ENCODE measurements at regions of chr10 and their contacts with region 1.

Region 1: GRCh38 chr10:119872860-119873681 is 428 bp upstream of the MCMBP start:
- DNase-seq: peak; percentile 83 to 96
- ATAC-seq: peak; percentile 92 to 98 (median 94)
- H3K4me3 ChIP-seq: peak overlapping the region; percentile 72
- H3K4me3 Mint-ChIP-seq: peak overlapping the region; percentile 92
- H3K27ac ChIP-seq: peak overlapping the region; percentile 65
- H3K27ac Mint-ChIP-seq: peak overlapping the region; percentile 83 to 91
- H3K4me1 ChIP-seq: peaks cover 17% of the 10 kb centered on the region
- H3K4me1 Mint-ChIP-seq: peaks cover 32 to 38% of the 10 kb centered on the region in 2 donors
- H3K27me3 ChIP-seq: no peaks in the 10 kb centered on the region
- H3K27me3 Mint-ChIP-seq: no peaks in the 10 kb centered on the region
- CTCF ChIP-seq: no peak

Region 2: GRCh38 chr10:119892188-119893065 is 19.4 kb after region 1 on chr10 and contains the start of gene SEC23IP:
- intact Hi-C with region 1: loop called (anchors 1 kb)
- DNase-seq: peak; percentile 85 to 94
- ATAC-seq: peak; percentile 97 to 99 (median 99)
- H3K4me3 ChIP-seq: peak within 1 kb of the TSS; percentile 76
- H3K4me3 Mint-ChIP-seq: peak within 1 kb of the TSS; percentile 98
- H3K27ac ChIP-seq: peak within 1 kb of the TSS; percentile 81
- H3K27ac Mint-ChIP-seq: peak within 1 kb of the TSS; percentile 92 to 95
- H3K4me1 ChIP-seq: peaks cover 18% of the 10 kb centered on the region
- H3K4me1 Mint-ChIP-seq: peaks cover 40 to 45% of the 10 kb centered on the region in 2 donors
- H3K27me3 ChIP-seq: no peaks in the 10 kb centered on the region
- H3K27me3 Mint-ChIP-seq: peaks cover 0 to 4% of the 10 kb centered on the region in 2 donors
- CTCF ChIP-seq: no peak
- total RNA-seq, gene SEC23IP: 45.1 to 54.5 (median 49.4) TPM